ENCODE measurements at regions of chr9 and their contacts with region 1.

Region 1: GRCh38 chr9:92140074-92140753 is 25.0 kb upstream of the SPTLC1 start:
- DNase-seq: peak; percentile 80
- ATAC-seq: peak; percentile 66
- H3K4me3 Mint-ChIP-seq: no peak overlapping the region
- H3K27ac Mint-ChIP-seq: no peak overlapping the region
- H3K4me1 Mint-ChIP-seq: peaks cover 10% of the 10 kb centered on the region
- H3K27me3 Mint-ChIP-seq: peaks cover 38% of the 10 kb centered on the region

Region 2: GRCh38 chr9:92165484-92165883 is 25.3 kb after region 1 on chr9:
- CTCF ChIA-PET with region 1: interaction called, 16 read pairs
- POLR2A ChIA-PET with region 1: no interaction called
- DNase-seq: no peak
- ATAC-seq: no peak
- H3K4me3 Mint-ChIP-seq: no peak overlapping the region
- H3K27ac Mint-ChIP-seq: no peak overlapping the region
- H3K4me1 Mint-ChIP-seq: no peaks in the 10 kb centered on the region
- H3K27me3 Mint-ChIP-seq: peaks cover 20% of the 10 kb centered on the region

Region 3: DNA sequence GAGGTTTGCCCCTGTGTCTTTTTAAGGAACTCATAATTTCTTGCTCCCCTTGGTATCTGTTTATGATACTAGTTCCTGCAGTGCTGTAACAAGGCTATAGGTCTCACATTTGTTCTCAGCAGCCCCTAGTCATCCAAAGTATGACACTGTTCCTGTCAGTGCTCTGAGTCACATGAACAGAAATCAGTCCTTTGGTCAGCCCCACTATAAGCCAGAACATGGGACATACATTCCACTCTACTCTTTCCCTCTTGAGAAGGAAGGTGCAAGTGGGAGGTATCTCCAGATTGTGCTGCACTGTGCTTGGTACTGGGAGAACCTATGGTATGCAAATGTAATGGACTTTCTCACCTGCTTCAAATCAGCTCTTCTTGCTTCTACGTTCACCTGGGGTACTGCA is 66.3 kb after region 1 on chr9:
- CTCF ChIA-PET with region 1: interaction called, 35 read pairs
- POLR2A ChIA-PET with region 1: no interaction called
- DNase-seq: no peak
- ATAC-seq: no peak
- H3K4me3 Mint-ChIP-seq: no peak overlapping the region
- H3K27ac Mint-ChIP-seq: no peak overlapping the region
- H3K4me1 Mint-ChIP-seq: no peaks in the 10 kb centered on the region
- H3K27me3 Mint-ChIP-seq: no peaks in the 10 kb centered on the region

Region 4: DNA sequence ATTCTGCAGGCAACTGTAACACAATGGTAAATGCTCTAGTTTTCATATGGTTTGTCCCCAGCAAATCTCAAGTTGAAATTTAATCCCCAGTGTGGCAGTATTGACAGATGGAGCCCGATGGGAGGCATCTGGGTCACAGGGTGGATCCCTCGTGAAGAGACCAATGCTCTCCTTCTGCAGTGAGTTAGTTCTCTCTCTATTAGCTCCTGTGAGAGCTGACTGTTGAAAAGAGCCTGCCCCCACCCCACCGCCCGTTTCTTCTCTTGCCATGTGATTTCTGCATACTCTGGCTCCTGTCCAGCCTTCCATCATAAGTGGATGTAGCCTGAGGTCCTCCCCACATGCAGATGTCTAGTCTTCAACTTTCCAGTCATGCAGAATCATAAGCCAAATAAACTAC is 126.3 kb after region 1 on chr9:
- CTCF ChIA-PET with region 1: interaction called, 10 read pairs
- POLR2A ChIA-PET with region 1: no interaction called
- DNase-seq: no peak
- ATAC-seq: no peak
- H3K4me3 Mint-ChIP-seq: no peak overlapping the region
- H3K27ac Mint-ChIP-seq: no peak overlapping the region
- H3K4me1 Mint-ChIP-seq: peaks cover 3% of the 10 kb centered on the region
- H3K27me3 Mint-ChIP-seq: no peaks in the 10 kb centered on the region

Region 5: DNA sequence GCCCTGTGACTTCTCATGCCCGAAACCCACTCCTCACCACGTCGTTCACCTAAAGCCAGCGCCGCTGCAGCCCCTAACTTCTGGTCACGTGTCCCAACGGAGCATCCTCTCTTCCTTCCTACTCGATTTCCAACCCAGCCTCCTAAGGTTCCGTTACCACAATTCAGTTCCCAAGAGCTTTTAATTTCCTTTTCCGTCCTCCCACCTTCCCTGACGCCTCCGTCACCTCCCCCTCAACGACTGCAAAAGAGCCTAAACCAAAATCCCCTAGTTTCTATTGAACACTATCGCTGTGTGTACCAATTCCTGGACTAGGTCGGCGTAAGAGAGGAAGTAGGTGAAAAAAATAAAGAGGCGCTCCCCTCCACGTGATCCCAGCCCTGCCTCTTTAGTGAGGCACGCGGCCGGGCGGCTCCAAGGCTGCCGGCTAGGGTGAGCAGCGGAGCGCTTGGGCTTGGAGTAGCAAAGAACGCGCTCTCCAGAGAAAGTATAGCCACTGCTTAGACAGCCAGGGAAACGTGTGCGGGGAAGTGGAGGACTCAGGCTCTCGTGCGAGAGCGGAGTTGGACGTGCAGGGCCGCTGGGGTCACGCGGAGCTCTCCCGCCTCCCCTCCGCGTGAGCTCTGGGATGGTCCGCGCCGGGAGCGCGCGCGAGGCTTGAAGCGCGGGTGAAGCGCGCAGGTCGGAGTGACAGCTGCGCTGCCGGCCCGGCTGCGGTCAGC is 185.2 kb after region 1 on chr9 and contains the starts of genes CENPP and NOL8:
- CTCF ChIA-PET with region 1: interaction called, 22 read pairs
- POLR2A ChIA-PET with region 1: interaction called, 5 read pairs
- DNase-seq: peak; percentile 90
- ATAC-seq: peak; percentile 95
- H3K4me3 Mint-ChIP-seq: peak within 1 kb of the TSS; percentile 96
- H3K27ac Mint-ChIP-seq: peak within 1 kb of the TSS; percentile 97
- H3K4me1 Mint-ChIP-seq: peaks cover 42% of the 10 kb centered on the region
- H3K27me3 Mint-ChIP-seq: no peaks in the 10 kb centered on the region
- total RNA-seq, gene CENPP: 26.4 to 29.1 TPM
- total RNA-seq, gene NOL8: 51.7 to 55.3 TPM

Measured in activated CD8-positive, alpha-beta T cell treated with anti-CD3 and anti-CD28 coated beads, Interleukin-2, amount 10 ng/mL, durations not matched to agents 7 days and 5 days (primary cell).